Heart left ventricle (tissue), 16 donors: ENCODE measurements at regions of chrX and their contacts with region 1.

Region 1: DNA sequence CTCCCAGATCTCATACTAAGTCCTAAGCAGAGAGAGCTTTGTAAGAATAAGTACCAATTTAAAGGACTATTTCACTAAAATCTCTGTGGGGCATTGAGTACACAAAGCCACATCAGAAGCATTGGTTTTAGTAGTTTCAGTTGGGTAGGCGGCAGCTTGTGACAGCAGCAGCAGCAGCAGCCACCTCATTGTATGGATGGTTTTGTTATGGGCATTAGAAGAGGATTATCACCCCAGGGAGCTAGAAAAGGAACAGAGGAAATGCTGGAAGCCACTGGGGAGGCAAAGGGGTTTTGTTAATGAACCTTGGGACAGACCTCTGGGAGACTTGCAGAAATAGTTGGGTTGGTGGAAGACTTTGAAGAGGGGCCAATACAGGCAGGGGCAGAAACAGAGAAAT is 93.9 kb upstream of the FRMPD3 start:
- DNase-seq: no peak
- ATAC-seq: no peak
- H3K4me3 ChIP-seq: no peak overlapping the region
- H3K27ac ChIP-seq: no peak overlapping the region
- H3K4me1 ChIP-seq: no peaks in the 10 kb centered on the region
- H3K27me3 ChIP-seq: peaks cover 0 to 41% (median 0%) of the 10 kb centered on the region in 9 donors
- CTCF ChIP-seq: no peak
- POLR2A ChIP-seq: no peak

Region 2: GRCh38 chrX:107421408-107421807 is 65.9 kb after region 1 on chrX:
- intact Hi-C with region 1: loop called in 1 of 10 experiments (anchors 10 kb)
- DNase-seq: no peak
- ATAC-seq: no peak
- H3K4me3 ChIP-seq: no peak overlapping the region
- H3K27ac ChIP-seq: no peak overlapping the region
- H3K4me1 ChIP-seq: no peaks in the 10 kb centered on the region
- H3K27me3 ChIP-seq: peaks cover 0 to 27% (median 0%) of the 10 kb centered on the region in 9 donors
- CTCF ChIP-seq: no peak
- POLR2A ChIP-seq: no peak

Region 3: DNA sequence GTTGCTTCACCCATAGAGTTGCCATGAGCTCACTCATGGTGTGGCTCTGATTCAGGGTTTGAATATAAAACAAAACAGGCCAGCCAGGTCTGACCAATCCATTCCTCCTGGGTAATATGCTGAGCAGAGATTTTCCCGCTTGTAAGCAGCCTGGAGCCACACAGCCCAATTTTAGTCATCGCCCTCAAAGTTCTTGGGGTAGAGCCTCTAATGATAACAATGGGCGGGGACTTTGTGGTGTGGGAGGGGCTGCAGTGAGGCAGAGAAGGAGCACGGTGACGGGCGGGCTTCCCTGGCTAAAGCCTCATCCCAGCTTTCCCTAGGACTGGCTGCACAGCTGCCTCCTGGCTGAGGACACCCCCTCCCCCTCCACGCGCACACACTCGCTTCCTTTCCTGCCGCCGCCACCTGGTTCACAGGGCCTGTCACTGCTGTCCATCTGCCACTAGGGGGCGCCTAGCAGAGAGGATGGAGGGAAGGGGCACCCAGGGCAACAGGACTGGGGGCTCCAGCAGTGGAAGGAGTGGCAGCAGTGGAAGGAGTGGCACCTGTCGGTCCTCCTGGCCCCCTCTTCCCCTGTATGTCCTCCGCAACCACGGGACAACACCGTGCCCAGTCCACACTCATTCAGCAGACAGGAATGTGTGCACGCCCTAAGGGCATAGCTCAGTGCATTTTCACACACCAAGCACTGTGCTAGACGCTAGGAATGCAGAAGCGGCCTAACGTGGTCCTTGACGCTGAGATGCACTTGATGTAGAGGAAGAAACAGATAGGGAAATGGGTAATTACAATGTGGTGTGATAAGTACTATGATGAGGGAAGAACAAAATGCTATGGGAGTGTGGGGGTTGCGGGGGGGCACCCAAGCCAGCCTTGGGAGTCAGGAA is 299.6 kb after region 1 on chrX:
- intact Hi-C with region 1: no loop called
- DNase-seq: peak; percentile 40 to 75 (median 56)
- ATAC-seq: peak; percentile 47 to 88 (median 79)
- H3K4me3 ChIP-seq: peak overlapping the region in 1 of 12 donors; percentile 25
- H3K27ac ChIP-seq: peak overlapping the region in 3 of 12 donors; percentile 11 to 43 (median 16)
- H3K4me1 ChIP-seq: peaks cover 0 to 10% (median 7%) of the 10 kb centered on the region in 12 donors
- H3K27me3 ChIP-seq: peaks cover 0 to 8% (median 0%) of the 10 kb centered on the region in 9 donors
- CTCF ChIP-seq: peak; percentile 51 to 79 (median 64)
- POLR2A ChIP-seq: no peak

Region 4: GRCh38 chrX:108439434-108439883 is 1083.9 kb after region 1 on chrX and contains the start of gene COL4A5:
- intact Hi-C with region 1: no loop called
- DNase-seq: peak in 4 of 5 donors; percentile 45 to 59 (median 54)
- ATAC-seq: peak; percentile 84 to 92 (median 90)
- H3K4me3 ChIP-seq: peak within 1 kb of the TSS; percentile 11 to 68 (median 54)
- H3K27ac ChIP-seq: peak within 1 kb of the TSS in 11 of 12 donors; percentile 0 to 82 (median 66)
- H3K4me1 ChIP-seq: no peaks in the 10 kb centered on the region
- H3K27me3 ChIP-seq: peaks cover 0 to 45% (median 0%) of the 10 kb centered on the region in 9 donors
- CTCF ChIP-seq: no peak
- POLR2A ChIP-seq: no peak
- total RNA-seq, gene COL4A5: 4.2 to 12.7 (median 7.7) TPM